B cell (primary cell): ENCODE measurements at regions of chr14 and their contacts with region 1.

Region 1: DNA sequence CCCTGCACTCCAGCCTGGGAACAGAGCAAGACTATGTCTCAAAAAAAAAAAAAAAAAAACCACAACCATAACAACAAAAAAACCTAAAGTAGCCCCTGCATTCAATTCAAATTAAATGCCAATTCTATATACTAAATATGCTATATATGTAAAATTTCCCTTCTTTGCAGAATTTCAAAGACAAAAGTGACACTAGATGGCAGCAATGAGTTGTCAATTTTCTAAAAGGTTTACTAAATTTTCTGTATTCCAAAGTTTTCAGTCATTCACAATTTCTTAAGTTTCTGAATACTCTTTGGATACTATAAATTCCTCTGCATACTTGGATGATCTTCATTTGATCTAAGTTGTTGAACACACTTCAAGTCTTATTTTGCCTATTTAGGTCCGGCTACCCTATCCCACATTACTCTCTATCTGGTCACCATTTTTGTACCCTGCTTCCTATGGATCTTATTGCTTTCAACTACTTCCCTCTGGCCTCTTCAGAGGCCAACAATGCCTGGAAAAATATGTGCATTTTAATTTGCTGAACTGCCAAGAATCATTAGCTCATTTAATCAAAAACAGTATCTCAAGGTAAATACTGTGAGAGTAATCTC is 27.9 kb downstream of the HNRNPC start:
- DNase-seq: peak; percentile 58
- ATAC-seq: no peak
- H3K4me3 ChIP-seq: no peak overlapping the region
- H3K4me3 Mint-ChIP-seq: no peak overlapping the region
- H3K27ac ChIP-seq: peak overlapping the region in 1 of 2 donors; percentile 10
- H3K27ac Mint-ChIP-seq: peak overlapping the region; percentile 0
- H3K4me1 ChIP-seq: peaks cover 0 to 5% of the 10 kb centered on the region in 2 donors
- H3K4me1 Mint-ChIP-seq: peaks cover 36% of the 10 kb centered on the region
- H3K27me3 ChIP-seq: no peaks in the 10 kb centered on the region
- H3K27me3 Mint-ChIP-seq: no peaks in the 10 kb centered on the region
- CTCF ChIP-seq: peak; percentile 74

Region 2: GRCh38 chr14:21395444-21395843 is 154.1 kb after region 1 on chr14:
- CTCF ChIA-PET with region 1: no interaction called
- POLR2A ChIA-PET with region 1: no interaction called
- intact Hi-C with region 1: loop called (anchors 5 kb)
- DNase-seq: no peak
- ATAC-seq: no peak
- H3K4me3 ChIP-seq: no peak overlapping the region
- H3K4me3 Mint-ChIP-seq: no peak overlapping the region
- H3K27ac ChIP-seq: no peak overlapping the region
- H3K27ac Mint-ChIP-seq: no peak overlapping the region
- H3K4me1 ChIP-seq: no peaks in the 10 kb centered on the region
- H3K4me1 Mint-ChIP-seq: no peaks in the 10 kb centered on the region
- H3K27me3 ChIP-seq: no peaks in the 10 kb centered on the region
- H3K27me3 Mint-ChIP-seq: no peaks in the 10 kb centered on the region
- CTCF ChIP-seq: no peak

Region 3: DNA sequence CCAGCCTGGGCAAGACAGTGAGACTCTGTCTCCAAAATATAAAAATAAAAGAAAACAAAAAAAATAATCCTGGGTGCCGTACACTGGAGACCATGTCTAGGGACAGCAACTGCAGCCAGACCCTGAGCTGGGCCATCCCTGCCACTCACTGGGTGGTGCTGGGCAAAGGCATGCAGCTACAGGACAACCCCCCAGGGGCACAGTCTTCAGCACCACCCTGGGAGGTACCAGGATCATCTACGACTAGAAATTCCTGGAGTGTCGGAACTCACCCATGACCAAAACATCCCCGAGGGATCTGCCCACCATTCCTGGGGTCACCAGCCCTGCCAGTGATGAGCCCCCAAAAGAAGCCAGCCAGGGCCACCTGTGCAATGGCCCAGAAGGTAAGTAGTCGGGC is 178.2 kb after region 1 on chr14:
- CTCF ChIA-PET with region 1: no interaction called
- POLR2A ChIA-PET with region 1: no interaction called
- intact Hi-C with region 1: no loop called
- DNase-seq: no peak
- ATAC-seq: no peak
- H3K4me3 ChIP-seq: no peak overlapping the region
- H3K4me3 Mint-ChIP-seq: no peak overlapping the region
- H3K27ac ChIP-seq: no peak overlapping the region
- H3K27ac Mint-ChIP-seq: no peak overlapping the region
- H3K4me1 ChIP-seq: no peaks in the 10 kb centered on the region
- H3K4me1 Mint-ChIP-seq: no peaks in the 10 kb centered on the region
- H3K27me3 ChIP-seq: no peaks in the 10 kb centered on the region
- H3K27me3 Mint-ChIP-seq: no peaks in the 10 kb centered on the region
- CTCF ChIP-seq: no peak